ENCODE measurements at regions of chr11 and their contacts with region 1.

Region 1: GRCh38 chr11:57116654-57117053 is 65.1 kb upstream of the LRRC55 start:
- DNase-seq: peak; percentile 46
- ATAC-seq: peak; percentile 23
- H3K4me3 Mint-ChIP-seq: no peak overlapping the region
- H3K27ac Mint-ChIP-seq: no peak overlapping the region
- H3K4me1 Mint-ChIP-seq: no peaks in the 10 kb centered on the region
- H3K27me3 Mint-ChIP-seq: peaks cover 4% of the 10 kb centered on the region

Region 2: GRCh38 chr11:57277845-57278709 is 161.4 kb after region 1 on chr11:
- CTCF ChIA-PET with region 1: interaction called, 3 read pairs
- POLR2A ChIA-PET with region 1: no interaction called
- intact Hi-C with region 1: loop called (anchors 5 to 10 kb)
- DNase-seq: peak; percentile 65
- ATAC-seq: no peak
- H3K4me3 Mint-ChIP-seq: no peak overlapping the region
- H3K27ac Mint-ChIP-seq: no peak overlapping the region
- H3K4me1 Mint-ChIP-seq: peaks cover 2% of the 10 kb centered on the region
- H3K27me3 Mint-ChIP-seq: peaks cover 30% of the 10 kb centered on the region

Measured in activated CD4-positive, alpha-beta T cell treated with anti-CD3 and anti-CD28 coated beads for 36 hours (primary cell).